Activated CD8-positive, alpha-beta T cell treated with anti-CD3 and anti-CD28 coated beads, Interleukin-2, amount 10 ng/mL, durations not matched to agents 7 days and 5 days (primary cell): ENCODE measurements at regions of chr2 and their contacts with region 1.

Region 1: DNA sequence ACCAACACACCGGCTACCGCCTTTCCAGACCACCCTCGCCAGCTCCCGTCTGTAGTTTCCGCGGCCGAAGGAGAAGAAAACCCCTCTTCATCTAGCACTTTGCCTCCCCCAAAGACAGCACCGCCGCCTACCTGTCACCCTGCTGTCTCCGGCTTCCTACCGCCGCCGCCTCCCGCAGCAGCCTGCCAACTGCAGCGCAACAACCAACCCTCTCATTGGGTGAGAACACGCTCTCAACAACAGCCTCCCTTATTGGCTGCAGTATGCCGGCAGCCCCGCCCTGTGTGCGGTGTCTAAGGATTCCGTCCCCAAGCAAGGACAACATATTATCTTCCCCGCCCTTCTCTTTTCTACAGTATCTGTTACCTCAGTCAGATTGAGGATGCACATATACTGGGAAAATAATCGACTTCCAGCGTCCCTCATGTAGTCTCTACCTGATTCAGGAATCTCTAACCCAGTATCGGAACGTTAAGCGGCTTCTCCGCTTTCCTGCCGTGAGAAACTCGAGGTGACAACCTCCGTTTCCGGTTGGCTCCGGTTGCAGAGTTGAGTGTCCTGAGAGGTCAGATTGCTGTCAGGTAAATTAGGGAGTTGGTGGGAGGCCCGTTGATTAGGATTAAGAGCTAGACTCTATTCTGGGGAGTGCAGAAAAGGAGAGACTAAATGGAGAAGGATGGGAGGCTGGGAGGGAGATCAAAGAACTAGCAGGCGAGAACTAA is at the starts of genes HYCC2 and NDUFB3:
- DNase-seq: peak; percentile 96
- ATAC-seq: peak; percentile 97
- H3K4me3 Mint-ChIP-seq: peak within 1 kb of the TSS; percentile 89
- H3K27ac Mint-ChIP-seq: peak within 1 kb of the TSS; percentile 88
- H3K4me1 Mint-ChIP-seq: peaks cover 46% of the 10 kb centered on the region
- H3K27me3 Mint-ChIP-seq: no peaks in the 10 kb centered on the region
- total RNA-seq, gene HYCC2: 35.9 to 40.2 TPM
- total RNA-seq, gene NDUFB3: 167 to 173 TPM

Region 2: GRCh38 chr2:200901459-200902072 is 170.1 kb before region 1 on chr2:
- CTCF ChIA-PET with region 1: interaction called, 101 read pairs
- POLR2A ChIA-PET with region 1: interaction called, 4 read pairs
- DNase-seq: peak; percentile 89
- ATAC-seq: peak; percentile 100
- H3K4me3 Mint-ChIP-seq: no peak overlapping the region
- H3K27ac Mint-ChIP-seq: peak overlapping the region; percentile 25
- H3K4me1 Mint-ChIP-seq: peaks cover 24% of the 10 kb centered on the region
- H3K27me3 Mint-ChIP-seq: no peaks in the 10 kb centered on the region

Region 3: GRCh38 chr2:200963124-200963917 is 108.3 kb before region 1 on chr2 and contains the start of gene ORC2:
- CTCF ChIA-PET with region 1: interaction called, 135 read pairs
- POLR2A ChIA-PET with region 1: interaction called, 6 read pairs
- DNase-seq: peak; percentile 94
- ATAC-seq: peak; percentile 97
- H3K4me3 Mint-ChIP-seq: peak within 1 kb of the TSS; percentile 93
- H3K27ac Mint-ChIP-seq: peak within 1 kb of the TSS; percentile 97
- H3K4me1 Mint-ChIP-seq: peaks cover 63% of the 10 kb centered on the region
- H3K27me3 Mint-ChIP-seq: no peaks in the 10 kb centered on the region
- total RNA-seq, gene ORC2: 47.4 to 57.2 TPM

Region 4: DNA sequence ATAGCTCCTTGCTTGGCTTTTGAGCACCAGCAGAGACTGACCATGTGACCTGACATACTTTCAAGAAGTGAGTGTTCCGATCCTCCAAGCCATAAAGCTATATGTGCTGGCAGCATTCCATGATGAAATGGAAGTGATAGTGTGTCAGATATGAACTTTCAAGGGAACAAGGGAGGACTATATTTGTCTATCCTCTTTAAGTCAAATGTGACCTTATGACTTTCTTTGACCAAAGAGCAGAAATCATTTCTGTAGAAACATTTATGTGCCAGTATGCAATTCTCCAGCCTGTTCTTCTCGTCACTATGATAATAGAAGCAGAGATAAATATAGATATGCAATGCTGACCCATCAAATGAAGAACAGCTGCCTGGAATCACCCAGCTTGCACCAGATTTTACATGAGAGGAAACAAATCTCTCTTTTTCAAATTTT is 14.5 kb before region 1 on chr2:
- CTCF ChIA-PET with region 1: interaction called, 11 read pairs
- POLR2A ChIA-PET with region 1: interaction called, 6 read pairs
- DNase-seq: no peak
- ATAC-seq: no peak
- H3K4me3 Mint-ChIP-seq: no peak overlapping the region
- H3K27ac Mint-ChIP-seq: no peak overlapping the region
- H3K4me1 Mint-ChIP-seq: peaks cover 6% of the 10 kb centered on the region
- H3K27me3 Mint-ChIP-seq: no peaks in the 10 kb centered on the region